ENCODE measurements at regions of chr19 and their contacts with region 1.

Region 1: GRCh38 chr19:16085115-16085514 is 8.8 kb downstream of the TPM4 start:
- DNase-seq: no peak
- H3K4me3 Mint-ChIP-seq: no peak overlapping the region
- H3K27ac Mint-ChIP-seq: peak overlapping the region; percentile 88
- H3K4me1 Mint-ChIP-seq: peaks cover 58% of the 10 kb centered on the region
- H3K27me3 Mint-ChIP-seq: no peaks in the 10 kb centered on the region

Region 2: DNA sequence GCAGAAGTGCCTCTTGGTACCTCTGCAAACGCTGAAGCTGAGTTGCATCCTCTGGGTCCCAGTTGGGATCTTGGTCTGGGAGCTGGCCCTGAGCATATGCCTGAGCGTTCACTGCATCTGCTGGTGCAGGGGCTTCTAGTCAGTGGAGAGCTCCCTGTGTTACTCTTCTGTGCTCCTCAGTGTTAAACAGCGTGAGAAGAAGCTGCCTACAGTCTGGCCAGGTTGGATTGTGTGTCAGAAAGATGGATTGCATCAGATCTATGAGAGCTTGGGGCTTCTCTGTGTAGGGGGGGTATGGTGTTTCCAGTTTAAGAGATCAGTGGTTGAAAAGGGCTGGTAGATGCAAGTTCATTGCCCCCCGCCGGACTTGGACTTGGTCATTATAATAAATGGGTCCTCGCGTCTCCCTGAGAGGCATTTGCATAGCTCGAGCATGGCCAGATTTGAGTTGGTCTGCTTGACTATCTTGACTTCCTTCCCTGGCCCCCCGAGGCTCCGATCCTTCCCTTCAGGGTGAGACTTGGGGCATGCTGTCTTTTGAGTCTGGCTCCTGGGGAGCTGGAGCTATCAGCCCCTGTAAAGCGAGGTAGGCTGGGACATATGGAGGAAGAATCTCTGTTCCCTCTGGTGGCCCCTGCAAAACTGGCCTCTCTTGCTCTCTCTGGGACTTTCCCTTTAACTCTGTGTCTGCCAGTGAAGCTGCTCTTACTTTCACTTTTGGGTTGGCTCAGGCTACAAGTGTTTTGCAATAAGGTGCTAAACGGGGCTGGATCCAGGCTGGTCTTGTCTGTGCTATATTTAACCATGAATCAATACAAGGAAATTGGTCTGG is 83.4 kb before region 1 on chr19:
- CTCF ChIA-PET with region 1: no interaction called
- intact Hi-C with region 1: no loop called
- DNase-seq: peak; percentile 69
- H3K4me3 Mint-ChIP-seq: peak overlapping the region; percentile 65
- H3K27ac Mint-ChIP-seq: peak overlapping the region; percentile 70
- H3K4me1 Mint-ChIP-seq: peaks cover 27% of the 10 kb centered on the region
- H3K27me3 Mint-ChIP-seq: no peaks in the 10 kb centered on the region

Region 3: GRCh38 chr19:16051254-16052025 is 33.7 kb before region 1 on chr19:
- CTCF ChIA-PET with region 1: interaction called, 3 read pairs
- intact Hi-C with region 1: loop called (anchors 2 kb)
- DNase-seq: peak; percentile 62
- H3K4me3 Mint-ChIP-seq: no peak overlapping the region
- H3K27ac Mint-ChIP-seq: no peak overlapping the region
- H3K4me1 Mint-ChIP-seq: peaks cover 4% of the 10 kb centered on the region
- H3K27me3 Mint-ChIP-seq: no peaks in the 10 kb centered on the region

Region 4: DNA sequence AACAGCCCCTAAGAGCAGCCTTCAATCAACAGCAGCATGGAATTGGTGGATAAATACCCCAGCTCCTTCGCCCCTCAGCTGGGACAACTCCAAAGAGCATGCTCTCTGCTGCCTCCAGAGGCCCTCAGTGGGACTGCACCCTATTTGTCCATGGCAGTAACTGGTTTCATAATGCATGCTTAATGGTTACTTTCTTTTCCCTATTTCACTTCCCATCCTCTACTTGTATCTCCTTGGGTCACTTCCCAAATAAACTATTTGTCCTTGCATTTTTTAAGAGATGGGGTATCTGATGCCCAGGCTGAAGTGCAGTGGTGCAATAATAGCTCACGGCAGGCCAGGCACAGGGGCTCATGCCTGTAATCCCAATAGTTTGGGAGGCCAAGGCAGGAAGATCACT is 22.3 kb before region 1 on chr19:
- CTCF ChIA-PET with region 1: interaction called, 20 read pairs
- intact Hi-C with region 1: no loop called
- DNase-seq: peak; percentile 84
- H3K4me3 Mint-ChIP-seq: no peak overlapping the region
- H3K27ac Mint-ChIP-seq: no peak overlapping the region
- H3K4me1 Mint-ChIP-seq: peaks cover 20% of the 10 kb centered on the region
- H3K27me3 Mint-ChIP-seq: no peaks in the 10 kb centered on the region

Region 5: DNA sequence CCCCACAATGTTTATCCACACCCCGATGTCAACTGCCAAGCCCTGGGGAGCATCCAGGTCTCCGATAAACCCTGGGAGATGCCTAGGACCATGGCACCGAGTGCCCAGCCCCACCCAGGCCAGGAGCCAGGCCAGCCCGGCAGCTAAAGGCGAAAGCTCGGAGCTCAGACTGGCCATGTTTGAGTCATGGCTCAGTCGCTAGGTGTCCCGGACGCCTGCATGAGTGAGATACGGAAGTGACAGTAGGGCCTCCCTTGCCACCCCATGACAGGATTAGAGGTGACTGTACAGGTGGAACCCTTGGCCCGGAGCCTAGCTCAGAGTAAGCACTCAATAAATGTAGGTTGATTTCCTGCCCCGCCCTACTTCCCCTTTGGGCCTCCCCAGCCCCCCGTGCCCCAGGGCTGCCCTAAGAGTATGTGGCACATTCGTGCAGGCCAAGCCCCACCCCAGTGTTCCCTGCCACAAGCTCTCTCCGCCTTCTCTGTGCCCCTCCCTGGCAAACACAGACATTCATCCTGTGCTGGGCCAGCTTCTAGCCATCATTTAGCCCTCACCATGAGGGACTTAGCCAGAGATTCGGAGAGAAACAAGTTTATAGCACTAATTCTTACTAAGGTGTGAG is 14.6 kb before region 1 on chr19:
- CTCF ChIA-PET with region 1: interaction called, 9 read pairs
- intact Hi-C with region 1: loop called (anchors 2 kb)
- DNase-seq: peak; percentile 96
- H3K4me3 Mint-ChIP-seq: no peak overlapping the region
- H3K27ac Mint-ChIP-seq: no peak overlapping the region
- H3K4me1 Mint-ChIP-seq: peaks cover 38% of the 10 kb centered on the region
- H3K27me3 Mint-ChIP-seq: no peaks in the 10 kb centered on the region

Region 6: GRCh38 chr19:16095071-16095571 is 10.0 kb after region 1 on chr19:
- CTCF ChIA-PET with region 1: interaction called, 14 read pairs
- intact Hi-C with region 1: no loop called
- DNase-seq: no peak
- H3K4me3 Mint-ChIP-seq: no peak overlapping the region
- H3K27ac Mint-ChIP-seq: peak overlapping the region; percentile 74
- H3K4me1 Mint-ChIP-seq: peaks cover 28% of the 10 kb centered on the region
- H3K27me3 Mint-ChIP-seq: no peaks in the 10 kb centered on the region